WTC11 (cell line): ENCODE measurements at regions of chr1 and their contacts with region 1.

Region 1: GRCh38 chr1:22317226-22317919 is 134.3 kb upstream of the ZBTB40 start:
- DNase-seq: peak; percentile 76
- ATAC-seq: peak; percentile 74
- H3K4me3 Mint-ChIP-seq: no peak overlapping the region
- H3K27ac Mint-ChIP-seq: no peak overlapping the region
- H3K4me1 Mint-ChIP-seq: peaks cover 41% of the 10 kb centered on the region
- H3K27me3 Mint-ChIP-seq: peaks cover 16% of the 10 kb centered on the region
- CTCF ChIP-seq: peak; percentile 81

Region 2: GRCh38 chr1:22225858-22226589 is 91.3 kb before region 1 on chr1:
- CTCF ChIA-PET with region 1: interaction called, 10 read pairs
- POLR2A ChIA-PET with region 1: no interaction called
- DNase-seq: peak; percentile 33
- ATAC-seq: peak; percentile 76
- H3K4me3 Mint-ChIP-seq: no peak overlapping the region
- H3K27ac Mint-ChIP-seq: no peak overlapping the region; the same call in 1 of the 2 replicates
- H3K4me1 Mint-ChIP-seq: peaks cover 8% of the 10 kb centered on the region
- H3K27me3 Mint-ChIP-seq: no peaks in the 10 kb centered on the region
- CTCF ChIP-seq: no peak

Region 3: DNA sequence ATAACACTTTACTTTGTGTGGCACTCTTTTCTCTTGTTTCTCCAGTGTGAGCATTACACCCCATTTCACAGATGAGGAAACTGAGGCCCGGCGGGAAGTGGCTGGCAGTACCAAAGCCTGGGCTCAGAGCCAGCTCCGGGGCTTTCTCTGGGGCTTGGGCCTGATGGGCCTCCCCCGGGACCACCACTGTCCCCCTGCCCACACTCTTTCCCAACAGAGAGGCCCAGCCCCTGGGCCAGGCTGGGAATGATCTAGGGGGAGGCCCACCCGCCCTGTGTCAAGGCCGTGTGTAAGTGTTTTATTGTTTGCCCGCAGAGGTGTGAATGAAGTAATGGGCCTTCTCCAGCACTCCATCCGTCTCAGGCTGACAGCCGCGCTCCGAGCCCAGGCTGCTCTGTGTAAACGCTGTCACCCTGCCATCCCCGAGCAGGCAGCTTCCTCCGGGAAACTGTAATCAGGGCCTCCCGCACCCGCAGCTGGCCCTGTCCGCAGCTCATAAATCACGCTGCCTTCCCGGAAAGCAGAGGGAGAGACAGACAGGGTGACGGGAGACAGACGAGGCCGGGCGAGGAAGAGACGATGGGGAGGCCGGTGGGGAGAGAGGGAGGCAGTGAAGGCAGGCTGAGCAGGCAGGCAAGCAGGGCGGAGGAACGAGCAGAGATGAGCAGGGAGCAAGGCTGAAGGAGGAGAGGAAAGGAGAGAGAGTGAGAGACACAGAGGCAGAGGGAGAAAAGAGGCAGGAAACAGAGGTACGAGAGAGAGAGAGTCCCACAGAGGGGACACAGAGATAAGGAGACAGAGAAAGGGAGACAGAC is 24.6 kb after region 1 on chr1:
- CTCF ChIA-PET with region 1: no interaction called
- POLR2A ChIA-PET with region 1: no interaction called
- DNase-seq: no peak
- ATAC-seq: peak; percentile 25; the same call in 1 of the 2 replicates
- H3K4me3 Mint-ChIP-seq: no peak overlapping the region
- H3K27ac Mint-ChIP-seq: 0 out of 2 replicates have a peak overlapping the region, but pooled peaks have one; percentile 48
- H3K4me1 Mint-ChIP-seq: peaks cover 11% of the 10 kb centered on the region
- H3K27me3 Mint-ChIP-seq: peaks cover 4% of the 10 kb centered on the region; the same call in 1 of the 2 replicates
- CTCF ChIP-seq: no peak

Region 4: GRCh38 chr1:22371408-22371807 is 54.0 kb after region 1 on chr1:
- CTCF ChIA-PET with region 1: no interaction called
- POLR2A ChIA-PET with region 1: no interaction called
- DNase-seq: no peak
- ATAC-seq: no peak
- H3K4me3 Mint-ChIP-seq: no peak overlapping the region
- H3K27ac Mint-ChIP-seq: no peak overlapping the region
- H3K4me1 Mint-ChIP-seq: peaks cover 21% of the 10 kb centered on the region
- H3K27me3 Mint-ChIP-seq: peaks cover 2% of the 10 kb centered on the region; the same call in 1 of the 2 replicates
- CTCF ChIP-seq: no peak